Activated CD4-positive, alpha-beta T cell treated with anti-CD3 and anti-CD28 coated beads for 36 hours (primary cell): ENCODE measurements at regions of chr1 and their contacts with region 1.

Region 1: GRCh38 chr1:28886731-28887418 is 27.5 kb upstream of the EPB41 start:
- DNase-seq: peak; percentile 95
- ATAC-seq: peak; percentile 77
- H3K4me3 Mint-ChIP-seq: peak overlapping the region; percentile 90
- H3K27ac Mint-ChIP-seq: peak overlapping the region; percentile 88
- H3K4me1 Mint-ChIP-seq: peaks cover 43% of the 10 kb centered on the region
- H3K27me3 Mint-ChIP-seq: no peaks in the 10 kb centered on the region

Region 2: GRCh38 chr1:28796352-28797211 is 90.3 kb before region 1 on chr1:
- CTCF ChIA-PET with region 1: no interaction called
- POLR2A ChIA-PET with region 1: no interaction called
- intact Hi-C with region 1: no loop called
- DNase-seq: no peak
- ATAC-seq: no peak
- H3K4me3 Mint-ChIP-seq: no peak overlapping the region
- H3K27ac Mint-ChIP-seq: no peak overlapping the region
- H3K4me1 Mint-ChIP-seq: peaks cover 3% of the 10 kb centered on the region
- H3K27me3 Mint-ChIP-seq: no peaks in the 10 kb centered on the region

Region 3: GRCh38 chr1:28914228-28915030 is 27.6 kb after region 1 on chr1 and contains the start of gene EPB41:
- CTCF ChIA-PET with region 1: interaction called, 11 read pairs
- POLR2A ChIA-PET with region 1: interaction called, 3 read pairs
- intact Hi-C with region 1: loop called (anchors 1 kb)
- DNase-seq: peak; percentile 94
- ATAC-seq: peak; percentile 84
- H3K4me3 Mint-ChIP-seq: peak within 1 kb of the TSS; percentile 86
- H3K27ac Mint-ChIP-seq: peak within 1 kb of the TSS; percentile 93
- H3K4me1 Mint-ChIP-seq: peaks cover 47% of the 10 kb centered on the region
- H3K27me3 Mint-ChIP-seq: no peaks in the 10 kb centered on the region
- total RNA-seq, gene EPB41: 75.5 to 130 TPM

Region 4: DNA sequence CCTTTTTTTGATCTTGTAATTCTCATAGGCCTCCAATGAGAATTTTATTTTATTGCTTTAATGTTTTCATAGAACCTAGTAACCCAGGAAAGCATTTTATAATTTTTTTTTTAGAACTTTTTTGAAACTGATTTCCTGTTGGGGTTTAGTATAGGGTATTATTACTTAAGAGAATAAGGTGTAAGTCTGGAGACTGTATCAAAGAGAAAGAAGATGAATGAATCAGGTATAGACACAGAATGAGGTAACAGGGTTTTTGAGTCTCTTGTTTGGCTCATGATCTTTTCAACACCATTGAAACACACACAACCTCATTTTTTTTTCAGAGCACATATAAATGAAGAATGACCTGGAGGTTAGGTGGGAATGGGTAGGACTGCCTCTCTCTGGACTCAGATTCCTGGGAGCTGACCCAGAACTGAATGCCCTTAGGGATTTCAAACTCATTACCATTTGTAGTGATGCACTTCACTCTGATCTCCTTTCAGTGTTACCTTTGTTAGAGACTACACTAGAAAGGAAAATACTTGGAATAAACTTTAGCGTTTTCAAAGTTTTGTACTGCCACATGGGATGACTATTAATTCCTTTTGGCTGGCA is 78.5 kb after region 1 on chr1:
- CTCF ChIA-PET with region 1: no interaction called
- POLR2A ChIA-PET with region 1: no interaction called
- intact Hi-C with region 1: loop called (anchors 2 kb)
- DNase-seq: no peak
- ATAC-seq: peak; percentile 34
- H3K4me3 Mint-ChIP-seq: no peak overlapping the region
- H3K27ac Mint-ChIP-seq: peak overlapping the region; percentile 37
- H3K4me1 Mint-ChIP-seq: peaks cover 58% of the 10 kb centered on the region
- H3K27me3 Mint-ChIP-seq: no peaks in the 10 kb centered on the region

Region 5: GRCh38 chr1:29033829-29034466 is 147.1 kb after region 1 on chr1:
- CTCF ChIA-PET with region 1: interaction called, 284 read pairs
- POLR2A ChIA-PET with region 1: no interaction called
- intact Hi-C with region 1: loop called (anchors 1 kb)
- DNase-seq: no peak
- ATAC-seq: peak; percentile 53
- H3K4me3 Mint-ChIP-seq: no peak overlapping the region
- H3K27ac Mint-ChIP-seq: no peak overlapping the region
- H3K4me1 Mint-ChIP-seq: no peaks in the 10 kb centered on the region
- H3K27me3 Mint-ChIP-seq: no peaks in the 10 kb centered on the region

Region 6: GRCh38 chr1:29062157-29062942 is 175.5 kb after region 1 on chr1:
- CTCF ChIA-PET with region 1: interaction called, 9 read pairs
- POLR2A ChIA-PET with region 1: no interaction called
- intact Hi-C with region 1: loop called in 1 of 2 experiments (anchors 1 kb)
- DNase-seq: peak; percentile 66
- ATAC-seq: peak; percentile 90
- H3K4me3 Mint-ChIP-seq: peak overlapping the region; percentile 56
- H3K27ac Mint-ChIP-seq: peak overlapping the region; percentile 99
- H3K4me1 Mint-ChIP-seq: peaks cover 59% of the 10 kb centered on the region
- H3K27me3 Mint-ChIP-seq: no peaks in the 10 kb centered on the region

Region 7: DNA sequence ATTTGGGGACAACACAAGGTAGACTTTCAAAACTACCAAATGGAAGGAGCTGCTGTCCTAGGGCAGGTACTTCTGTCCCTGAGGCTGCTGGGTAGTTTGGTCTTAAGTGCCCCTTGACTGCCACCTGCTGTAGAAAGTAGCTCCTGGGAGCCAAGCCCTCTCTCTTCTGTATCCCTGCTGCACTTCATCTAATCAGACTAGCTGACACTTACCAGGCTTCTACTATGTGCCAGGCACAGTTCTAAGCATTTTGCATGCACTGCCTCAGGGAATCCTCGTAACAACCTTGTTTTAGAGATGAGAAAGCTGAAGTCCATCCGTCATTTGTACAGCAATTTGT is 310.7 kb after region 1 on chr1:
- CTCF ChIA-PET with region 1: interaction called, 27 read pairs
- POLR2A ChIA-PET with region 1: no interaction called
- intact Hi-C with region 1: loop called in 1 of 2 experiments (anchors 1 kb)
- DNase-seq: peak; percentile 56
- ATAC-seq: peak; percentile 94
- H3K4me3 Mint-ChIP-seq: no peak overlapping the region
- H3K27ac Mint-ChIP-seq: no peak overlapping the region
- H3K4me1 Mint-ChIP-seq: peaks cover 4% of the 10 kb centered on the region
- H3K27me3 Mint-ChIP-seq: no peaks in the 10 kb centered on the region

Region 8: GRCh38 chr1:29230553-29231378 is 343.9 kb after region 1 on chr1 and contains the start of gene MECR:
- CTCF ChIA-PET with region 1: interaction called, 3 read pairs
- POLR2A ChIA-PET with region 1: no interaction called
- intact Hi-C with region 1: loop called in 1 of 2 experiments (anchors 1 kb)
- DNase-seq: peak; percentile 97
- ATAC-seq: peak; percentile 97
- H3K4me3 Mint-ChIP-seq: peak within 1 kb of the TSS; percentile 94
- H3K27ac Mint-ChIP-seq: peak within 1 kb of the TSS; percentile 94
- H3K4me1 Mint-ChIP-seq: peaks cover 18% of the 10 kb centered on the region
- H3K27me3 Mint-ChIP-seq: peaks cover 9% of the 10 kb centered on the region
- total RNA-seq, gene MECR: 41.3 to 43.1 TPM